ENCODE measurements at regions of chr2 and their contacts with region 1.

Region 1: GRCh38 chr2:18749912-18750526 is 160.7 kb upstream of the NT5C1B start:
- DNase-seq: peak in 6 of 10 donors; percentile 32 to 71 (median 42)
- H3K4me3 ChIP-seq: no peak overlapping the region
- H3K27ac ChIP-seq: no peak overlapping the region
- H3K27me3 ChIP-seq: no peaks in the 10 kb centered on the region
- CTCF ChIP-seq: peak; percentile 70 to 95 (median 85)

Region 2: DNA sequence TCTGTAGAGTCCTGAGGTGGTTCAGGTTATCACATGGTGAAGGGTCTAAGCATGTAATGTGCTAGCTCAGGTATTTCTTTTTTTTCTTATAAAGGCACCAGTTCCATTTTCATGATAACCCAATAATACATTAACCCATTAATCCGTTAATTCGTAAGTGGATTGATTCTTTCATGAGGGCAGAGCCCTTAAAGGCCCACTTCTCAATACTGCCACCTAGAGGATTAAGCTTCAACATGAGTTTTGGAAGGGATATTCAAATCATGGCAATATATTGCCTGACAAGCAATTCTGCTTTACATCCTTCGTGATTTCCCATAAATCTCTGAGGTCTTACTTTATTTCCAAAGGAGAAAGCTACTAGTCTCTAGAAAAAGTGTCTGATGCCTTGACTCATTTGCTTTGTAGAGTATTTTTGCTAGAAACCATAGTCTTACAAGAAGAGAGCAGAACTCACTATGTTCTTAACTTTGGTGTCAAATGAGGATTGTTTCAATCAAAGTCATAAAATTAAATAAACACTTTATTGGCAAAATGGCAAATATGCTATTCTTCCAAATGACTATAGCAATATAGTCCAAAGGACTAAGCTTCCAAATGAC is 600.3 kb before region 1 on chr2:
- intact Hi-C with region 1: no loop called
- DNase-seq: no peak
- H3K4me3 ChIP-seq: no peak overlapping the region
- H3K27ac ChIP-seq: no peak overlapping the region
- H3K27me3 ChIP-seq: peaks cover 0 to 12% (median 0%) of the 10 kb centered on the region in 45 donors
- CTCF ChIP-seq: peak; percentile 55 to 87 (median 74)

Region 3: DNA sequence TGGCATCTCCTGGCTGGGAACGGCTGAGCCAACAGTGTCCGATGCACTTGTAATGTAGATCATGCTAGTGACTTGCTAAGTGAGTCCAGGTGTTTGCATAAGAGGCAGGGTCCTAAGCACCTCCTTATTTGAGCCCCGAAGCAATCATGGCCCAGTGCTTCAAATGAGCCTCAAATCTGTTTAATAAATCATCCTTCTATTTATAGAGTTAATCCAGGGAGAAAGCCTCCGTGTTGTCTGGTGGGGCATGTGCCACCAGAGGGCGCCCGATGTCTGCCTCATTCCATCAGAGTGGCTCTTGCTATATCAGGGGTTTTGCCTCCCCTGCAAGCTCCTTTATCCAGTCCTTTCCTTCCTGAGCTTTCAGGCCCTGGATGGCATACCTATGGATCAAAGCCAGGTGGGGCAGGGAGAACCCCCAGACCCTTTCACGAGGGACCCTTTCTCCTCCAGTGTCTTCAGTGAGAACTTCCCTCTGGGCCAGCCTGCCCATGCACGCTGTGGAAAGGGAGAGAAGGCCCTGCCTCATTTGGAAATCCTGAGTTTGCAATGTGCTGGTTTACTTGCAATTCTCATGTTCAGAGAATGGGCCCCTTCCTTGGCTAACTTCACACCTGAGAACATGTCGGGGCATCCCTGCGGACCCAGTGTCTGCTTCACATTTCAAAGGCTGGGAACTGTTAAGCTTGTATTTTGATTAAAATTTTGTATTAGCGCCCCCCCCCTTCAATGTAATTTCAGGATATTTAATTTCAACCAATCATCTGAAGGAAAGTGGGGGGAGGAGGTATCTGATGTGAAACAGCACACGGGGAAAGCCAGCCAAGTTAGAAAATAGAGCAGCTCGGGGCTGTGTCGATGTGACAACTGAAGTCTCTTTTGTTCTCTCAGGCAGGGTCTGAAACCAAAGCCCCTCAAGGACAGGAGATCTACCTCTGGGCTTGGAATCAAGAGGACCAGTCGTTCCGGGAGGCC is 229.3 kb before region 1 on chr2:
- intact Hi-C with region 1: loop called in 1 of 2 experiments (anchors 10 kb)
- DNase-seq: peak; percentile 70 to 90 (median 82)
- H3K4me3 ChIP-seq: peak overlapping the region in 19 of 59 donors; percentile 4 to 48 (median 19)
- H3K27ac ChIP-seq: peak overlapping the region in 1 of 59 donors; percentile 9
- H3K27me3 ChIP-seq: peaks cover 0 to 21% (median 0%) of the 10 kb centered on the region in 45 donors
- CTCF ChIP-seq: peak; percentile 75 to 95 (median 89)

Region 4: GRCh38 chr2:19868705-19869580 is 1118.9 kb after region 1 on chr2:
- intact Hi-C with region 1: loop called in 1 of 2 experiments (anchors 5 kb)
- DNase-seq: peak in 1 of 10 donors; percentile 38
- H3K4me3 ChIP-seq: peak overlapping the region in 57 of 59 donors; percentile 18 to 73 (median 47)
- H3K27ac ChIP-seq: no peak overlapping the region
- H3K27me3 ChIP-seq: peaks cover 0 to 33% (median 6%) of the 10 kb centered on the region in 45 donors
- CTCF ChIP-seq: no peak